ENCODE measurements at regions of chr6 and their contacts with region 1.

Region 1: GRCh38 chr6:44246663-44247337 is at the start of gene HSP90AB1:
- DNase-seq: peak; percentile 98
- H3K4me3 ChIP-seq: peak within 1 kb of the TSS; percentile 54 to 85 (median 76)
- H3K27ac ChIP-seq: peak within 1 kb of the TSS; percentile 65
- H3K4me1 ChIP-seq: peaks cover 26% of the 10 kb centered on the region
- H3K27me3 ChIP-seq: no peaks in the 10 kb centered on the region
- CTCF ChIP-seq: no peak
- POLR2A ChIP-seq: peak; percentile 100
- total RNA-seq, gene HSP90AB1: 1,088 and 1,201 TPM in 2 replicates

Region 2: GRCh38 chr6:44257025-44257752 is 10.4 kb after region 1 on chr6 and contains the start of gene SLC35B2:
- CTCF ChIA-PET with region 1: interaction called, 38 read pairs
- POLR2A ChIA-PET with region 1: interaction called, 49 read pairs
- dilution Hi-C with region 1: no loop called
- intact Hi-C with region 1: loop called (anchors 1 kb)
- DNase-seq: peak; percentile 76
- H3K4me3 ChIP-seq: peak within 1 kb of the TSS; percentile 67 to 89 (median 74)
- H3K27ac ChIP-seq: peak within 1 kb of the TSS; percentile 49
- H3K4me1 ChIP-seq: peaks cover 14% of the 10 kb centered on the region
- H3K27me3 ChIP-seq: no peaks in the 10 kb centered on the region
- CTCF ChIP-seq: peak; percentile 65 to 66
- POLR2A ChIP-seq: peak; percentile 79
- total RNA-seq, gene SLC35B2: 53.4 and 53.9 TPM in 2 replicates

Measured in endothelial cell of umbilical vein (primary cell).